Sigmoid colon (tissue), 7 donors: ENCODE measurements at regions of chr1 and their contacts with region 1.

Region 1: GRCh38 chr1:165144757-165145397 is 211.6 kb downstream of the LMX1A start:
- DNase-seq: no peak
- H3K4me3 ChIP-seq: no peak overlapping the region
- H3K27ac ChIP-seq: no peak overlapping the region
- H3K4me1 ChIP-seq: no peaks in the 10 kb centered on the region
- H3K27me3 ChIP-seq: peaks cover 0 to 15% (median 0%) of the 10 kb centered on the region in 3 donors
- CTCF ChIP-seq: peak in 3 of 4 experiments; percentile 19 to 71 (median 28)
- EP300 ChIP-seq: no peak
- POLR2A ChIP-seq: no peak

Region 2: GRCh38 chr1:165367375-165367993 is 222.6 kb after region 1 on chr1:
- intact Hi-C with region 1: loop called (anchors 10 kb)
- DNase-seq: peak; percentile 90
- H3K4me3 ChIP-seq: no peak overlapping the region
- H3K27ac ChIP-seq: no peak overlapping the region
- H3K4me1 ChIP-seq: peaks cover 0 to 8% (median 4%) of the 10 kb centered on the region in 4 donors
- H3K27me3 ChIP-seq: no peaks in the 10 kb centered on the region
- CTCF ChIP-seq: peak; percentile 51 to 98 (median 82)
- EP300 ChIP-seq: no peak
- POLR2A ChIP-seq: no peak